GM12878 (cell line): ENCODE measurements at regions of chr2 and their contacts with region 1.

Region 1: GRCh38 chr2:174248187-174248997 is at the start of gene OLA1:
- DNase-seq: peak; percentile 75
- ATAC-seq: peak; percentile 98
- H3K4me3 ChIP-seq: peak within 1 kb of the TSS; percentile 82
- H3K27ac ChIP-seq: peak within 1 kb of the TSS; percentile 87
- H3K4me1 ChIP-seq: peaks cover 6% of the 10 kb centered on the region
- H3K27me3 ChIP-seq: no peaks in the 10 kb centered on the region
- CTCF ChIP-seq: no peak
- EP300 ChIP-seq: peak in 1 of 2 experiments; percentile 4; a peak in 1 of 4 replicates
- POLR2A ChIP-seq: peak; percentile 95
- RAD21 ChIP-seq: no peak
- polyA plus RNA-seq, gene OLA1: 131 to 141 TPM

Region 2: GRCh38 chr2:173874894-173875237 is 373.5 kb before region 1 on chr2:
- CTCF ChIA-PET with region 1: no interaction called
- POLR2A ChIA-PET with region 1: no interaction called
- RAD21 ChIA-PET with region 1: no interaction called
- SMC1A ChIA-PET with region 1: no interaction called
- in situ Hi-C with region 1: no loop called
- intact Hi-C with region 1: no loop called
- DNase-seq: peak; percentile 84
- ATAC-seq: peak; percentile 99
- H3K4me3 ChIP-seq: no peak overlapping the region
- H3K27ac ChIP-seq: no peak overlapping the region
- H3K4me1 ChIP-seq: peaks cover 12% of the 10 kb centered on the region
- H3K27me3 ChIP-seq: no peaks in the 10 kb centered on the region
- CTCF ChIP-seq: no peak
- EP300 ChIP-seq: no peak
- POLR2A ChIP-seq: no peak
- RAD21 ChIP-seq: no peak

Region 3: DNA sequence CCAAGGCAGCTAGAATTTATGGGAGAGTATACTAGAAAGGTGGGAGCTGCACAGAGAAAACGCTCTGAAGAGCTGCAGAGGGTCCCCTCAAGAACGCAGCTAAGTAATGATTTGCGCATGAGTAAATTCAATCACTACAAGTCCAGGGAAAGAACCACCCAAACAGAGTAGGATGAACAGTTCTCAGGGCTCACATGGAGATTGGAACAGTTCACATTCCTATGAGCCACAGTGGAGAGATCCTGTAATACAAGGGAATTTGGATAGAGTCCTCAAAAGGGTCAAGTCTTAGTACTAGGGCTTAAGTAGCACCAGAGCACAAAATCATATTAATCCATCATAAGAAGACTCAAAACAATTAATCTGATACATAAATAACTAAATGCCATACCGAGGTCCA is 12.7 kb before region 1 on chr2:
- CTCF ChIA-PET with region 1: interaction called, 3 read pairs
- POLR2A ChIA-PET with region 1: interaction called, 19 read pairs
- RAD21 ChIA-PET with region 1: interaction called, 7 read pairs
- SMC1A ChIA-PET with region 1: interaction called, 15 read pairs
- in situ Hi-C with region 1: no loop called
- intact Hi-C with region 1: no loop called
- DNase-seq: no peak
- ATAC-seq: no peak
- H3K4me3 ChIP-seq: no peak overlapping the region
- H3K27ac ChIP-seq: no peak overlapping the region
- H3K4me1 ChIP-seq: no peaks in the 10 kb centered on the region
- H3K27me3 ChIP-seq: no peaks in the 10 kb centered on the region
- CTCF ChIP-seq: no peak
- EP300 ChIP-seq: no peak
- POLR2A ChIP-seq: no peak
- RAD21 ChIP-seq: no peak

Region 4: DNA sequence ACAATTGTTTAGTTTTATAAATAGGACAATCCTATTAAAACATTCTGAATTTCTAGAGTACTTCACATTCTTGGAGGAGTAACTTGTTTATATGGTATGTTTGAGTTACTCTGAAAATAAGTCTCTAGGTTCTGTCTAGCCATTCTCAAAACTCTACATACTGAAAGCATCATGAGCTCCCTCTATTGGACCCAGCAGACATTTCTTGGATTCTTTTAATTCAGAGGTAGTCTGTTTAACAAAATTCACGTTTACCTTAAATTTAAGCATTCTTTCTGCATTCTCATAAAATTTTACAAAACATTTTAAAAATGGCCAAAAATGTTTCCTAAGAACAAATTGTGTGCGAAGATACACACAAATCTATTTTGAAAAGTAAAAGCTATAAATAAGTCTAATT is 101.6 kb after region 1 on chr2:
- CTCF ChIA-PET with region 1: no interaction called
- POLR2A ChIA-PET with region 1: no interaction called
- RAD21 ChIA-PET with region 1: no interaction called
- SMC1A ChIA-PET with region 1: no interaction called
- in situ Hi-C with region 1: no loop called
- intact Hi-C with region 1: no loop called
- DNase-seq: no peak
- ATAC-seq: peak; percentile 36; the same call in 1 of the 3 replicates
- H3K4me3 ChIP-seq: no peak overlapping the region
- H3K27ac ChIP-seq: no peak overlapping the region
- H3K4me1 ChIP-seq: no peaks in the 10 kb centered on the region
- H3K27me3 ChIP-seq: no peaks in the 10 kb centered on the region
- CTCF ChIP-seq: peak; percentile 20 to 31 (median 26); a peak in 3 of 6 replicates
- EP300 ChIP-seq: no peak
- POLR2A ChIP-seq: no peak
- RAD21 ChIP-seq: peak; percentile 17; the same call in 1 of the 2 replicates